Dorsolateral prefrontal cortex (tissue), 120 donors: ENCODE measurements at regions of chr17 and their contacts with region 1.

Region 1: GRCh38 chr17:77208217-77208808 is 67.5 kb downstream of the SEC14L1 start:
- DNase-seq: peak in 7 of 10 donors; percentile 50 to 78 (median 60)
- H3K4me3 ChIP-seq: peak overlapping the region in 6 of 59 donors; percentile 12 to 25 (median 18)
- H3K27ac ChIP-seq: peak overlapping the region; percentile 44 to 98 (median 94)
- H3K27me3 ChIP-seq: no peaks in the 10 kb centered on the region
- CTCF ChIP-seq: peak in 50 of 56 donors; percentile 16 to 70 (median 49)

Region 2: GRCh38 chr17:76943781-76944213 is 264.5 kb before region 1 on chr17:
- intact Hi-C with region 1: no loop called
- DNase-seq: peak in 1 of 10 donors; percentile 32
- H3K4me3 ChIP-seq: no peak overlapping the region
- H3K27ac ChIP-seq: peak overlapping the region in 8 of 59 donors; percentile 4 to 59 (median 29)
- H3K27me3 ChIP-seq: no peaks in the 10 kb centered on the region
- CTCF ChIP-seq: no peak

Region 3: GRCh38 chr17:77096570-77097214 is 111.6 kb before region 1 on chr17:
- intact Hi-C with region 1: loop called (anchors 2 to 5 kb)
- DNase-seq: no peak
- H3K4me3 ChIP-seq: peak overlapping the region in 6 of 59 donors; percentile 0 to 20 (median 6)
- H3K27ac ChIP-seq: peak overlapping the region; percentile 52 to 100 (median 97)
- H3K27me3 ChIP-seq: no peaks in the 10 kb centered on the region
- CTCF ChIP-seq: peak; percentile 68 to 95 (median 85)